ENCODE measurements at regions of chr9 and their contacts with region 1.

Region 1: DNA sequence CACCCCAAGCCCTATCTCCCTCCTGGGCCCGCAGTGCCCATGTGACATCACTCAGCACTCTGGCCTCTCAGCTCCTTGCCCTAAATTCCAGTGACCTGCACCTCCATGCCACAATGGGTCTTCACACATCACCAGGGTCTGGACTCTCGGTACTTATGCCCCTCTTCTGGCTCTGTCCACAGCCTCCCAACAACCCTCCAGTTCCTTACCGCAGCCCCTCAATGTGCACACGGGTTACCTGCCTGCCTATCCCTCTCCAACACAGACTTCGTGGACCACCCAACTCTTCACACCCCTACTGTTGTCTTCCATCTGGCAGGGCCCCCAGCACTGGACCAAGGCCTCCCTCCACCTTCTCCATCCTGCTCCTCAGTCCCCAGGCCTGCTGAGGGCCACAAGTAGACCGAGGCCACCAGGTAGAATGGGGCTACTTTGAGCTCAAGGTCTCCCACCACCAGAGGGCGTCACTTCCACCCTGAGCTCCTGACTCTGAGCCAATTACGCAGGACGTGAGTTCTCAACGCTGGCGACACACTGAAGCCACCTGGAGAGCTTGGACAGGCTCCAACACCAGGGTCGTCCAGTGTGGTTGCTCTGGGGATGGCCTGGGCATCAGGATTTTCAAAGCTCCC is 172.1 kb downstream of the GABBR2 start:
- DNase-seq: peak; percentile 4
- ATAC-seq: peak; percentile 89
- H3K4me3 ChIP-seq: no peak overlapping the region
- H3K27ac ChIP-seq: no peak overlapping the region
- H3K4me1 ChIP-seq: no peaks in the 10 kb centered on the region
- H3K27me3 ChIP-seq: peaks cover 0 to 5% of the 10 kb centered on the region in 2 experiments; a peak in 1 of 4 replicates
- CTCF ChIP-seq: peak; percentile 53 to 78 (median 74)
- EP300 ChIP-seq: no peak
- POLR2A ChIP-seq: no peak
- RAD21 ChIP-seq: peak; percentile 58

Region 2: DNA sequence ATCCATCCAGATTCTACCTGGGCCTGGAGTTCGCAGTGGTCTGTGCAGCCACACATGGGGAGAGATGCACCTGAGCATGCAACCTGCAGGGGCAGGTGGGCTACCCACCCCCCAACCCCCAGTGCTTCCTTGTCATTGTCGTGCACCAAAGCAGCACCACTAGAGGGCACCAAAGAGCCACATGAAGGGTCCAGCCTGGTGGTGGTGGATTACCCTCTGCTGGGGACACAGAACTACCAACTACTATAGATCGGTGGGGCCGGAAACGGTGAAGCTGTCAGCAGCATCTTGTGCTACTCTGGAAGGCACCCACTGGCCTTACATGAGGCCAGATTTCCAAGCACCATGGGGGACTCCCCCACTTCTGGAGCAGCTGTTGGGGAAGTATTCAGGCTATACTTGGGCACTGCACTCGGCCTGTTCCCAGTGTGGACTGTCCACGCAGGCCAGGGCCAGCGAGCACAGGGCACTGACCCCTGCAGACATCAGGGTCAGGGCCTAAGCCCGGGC is 221.1 kb before region 1 on chr9:
- CTCF ChIA-PET with region 1: no interaction called
- POLR2A ChIA-PET with region 1: no interaction called
- RAD21 ChIA-PET with region 1: interaction called, 4 read pairs
- SMC1A ChIA-PET with region 1: no interaction called
- in situ Hi-C with region 1: no loop called
- intact Hi-C with region 1: loop called (anchors 10 kb)
- DNase-seq: peak; percentile 26
- ATAC-seq: peak; percentile 95
- H3K4me3 ChIP-seq: no peak overlapping the region
- H3K27ac ChIP-seq: no peak overlapping the region
- H3K4me1 ChIP-seq: no peaks in the 10 kb centered on the region
- H3K27me3 ChIP-seq: no peaks in the 10 kb centered on the region
- CTCF ChIP-seq: peak; percentile 91 to 94 (median 94)
- EP300 ChIP-seq: no peak
- POLR2A ChIP-seq: no peak
- RAD21 ChIP-seq: peak; percentile 94

Region 3: DNA sequence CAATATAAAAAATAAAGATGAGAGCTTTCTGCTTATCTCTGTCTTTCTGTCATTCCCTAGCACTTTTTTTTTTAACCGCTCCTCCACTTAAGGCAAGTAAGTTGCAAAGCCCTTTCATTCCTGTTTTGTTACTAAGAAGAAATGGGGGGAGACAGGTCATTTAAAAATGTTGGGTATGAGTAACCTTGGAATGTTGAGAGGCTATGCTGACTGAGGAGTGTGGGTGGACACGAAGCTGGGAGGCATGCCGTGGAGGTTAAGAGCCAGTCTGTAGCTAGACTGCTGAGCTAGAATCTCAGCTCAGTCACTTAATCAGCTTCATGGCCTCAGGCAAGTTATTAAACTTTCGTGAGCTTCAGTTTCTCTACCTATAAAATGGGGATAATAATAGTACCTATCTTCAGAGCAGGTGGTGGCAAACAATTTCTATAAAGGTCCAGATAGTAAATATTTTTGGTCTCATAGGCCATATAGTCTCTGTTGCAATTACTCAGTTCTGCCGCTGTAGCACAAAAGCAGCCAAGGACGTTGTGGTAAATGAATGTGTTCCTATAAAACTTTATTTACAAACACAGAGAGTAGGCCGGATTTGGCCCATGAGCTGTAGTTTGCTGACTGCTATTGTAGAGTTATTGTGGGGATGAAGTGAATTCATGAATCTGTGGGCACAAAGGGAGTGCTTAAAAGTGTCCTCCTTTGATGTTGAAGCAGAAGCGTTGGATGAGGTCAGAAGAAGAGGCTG is 47.9 kb before region 1 on chr9:
- CTCF ChIA-PET with region 1: no interaction called
- POLR2A ChIA-PET with region 1: no interaction called
- RAD21 ChIA-PET with region 1: no interaction called
- SMC1A ChIA-PET with region 1: no interaction called
- in situ Hi-C with region 1: no loop called
- intact Hi-C with region 1: no loop called
- DNase-seq: no peak
- ATAC-seq: no peak
- H3K4me3 ChIP-seq: no peak overlapping the region
- H3K27ac ChIP-seq: no peak overlapping the region
- H3K4me1 ChIP-seq: no peaks in the 10 kb centered on the region
- H3K27me3 ChIP-seq: 0 out of 4 replicates have a peak, but pooled peaks cover 0 to 1% of the 10 kb centered on the region in 2 experiments
- CTCF ChIP-seq: no peak
- EP300 ChIP-seq: no peak
- POLR2A ChIP-seq: no peak
- RAD21 ChIP-seq: no peak

Region 4: GRCh38 chr9:98575379-98576346 is 39.0 kb after region 1 on chr9:
- CTCF ChIA-PET with region 1: interaction called, 11 read pairs
- POLR2A ChIA-PET with region 1: no interaction called
- RAD21 ChIA-PET with region 1: no interaction called
- SMC1A ChIA-PET with region 1: no interaction called
- in situ Hi-C with region 1: no loop called
- intact Hi-C with region 1: no loop called
- DNase-seq: peak; percentile 86
- ATAC-seq: peak; percentile 87
- H3K4me3 ChIP-seq: no peak overlapping the region
- H3K27ac ChIP-seq: peak overlapping the region; percentile 31
- H3K4me1 ChIP-seq: peaks cover 28% of the 10 kb centered on the region
- H3K27me3 ChIP-seq: no peaks in the 10 kb centered on the region
- CTCF ChIP-seq: no peak
- EP300 ChIP-seq: peak in 1 of 2 experiments; percentile 27; a peak in 1 of 4 replicates
- POLR2A ChIP-seq: no peak
- RAD21 ChIP-seq: no peak

Region 5: GRCh38 chr9:98707166-98708102 is 170.8 kb after region 1 on chr9:
- CTCF ChIA-PET with region 1: no interaction called
- POLR2A ChIA-PET with region 1: no interaction called
- RAD21 ChIA-PET with region 1: no interaction called
- SMC1A ChIA-PET with region 1: no interaction called
- in situ Hi-C with region 1: no loop called
- intact Hi-C with region 1: loop called (anchors 2 kb)
- DNase-seq: no peak
- ATAC-seq: peak; percentile 80
- H3K4me3 ChIP-seq: no peak overlapping the region
- H3K27ac ChIP-seq: no peak overlapping the region
- H3K4me1 ChIP-seq: no peaks in the 10 kb centered on the region
- H3K27me3 ChIP-seq: peaks cover 3 to 12% of the 10 kb centered on the region in 2 experiments; a peak in 3 of 4 replicates
- CTCF ChIP-seq: peak; percentile 34 to 40 (median 35); a peak in 4 of 6 replicates
- EP300 ChIP-seq: no peak
- POLR2A ChIP-seq: no peak
- RAD21 ChIP-seq: peak; percentile 40

Region 6: DNA sequence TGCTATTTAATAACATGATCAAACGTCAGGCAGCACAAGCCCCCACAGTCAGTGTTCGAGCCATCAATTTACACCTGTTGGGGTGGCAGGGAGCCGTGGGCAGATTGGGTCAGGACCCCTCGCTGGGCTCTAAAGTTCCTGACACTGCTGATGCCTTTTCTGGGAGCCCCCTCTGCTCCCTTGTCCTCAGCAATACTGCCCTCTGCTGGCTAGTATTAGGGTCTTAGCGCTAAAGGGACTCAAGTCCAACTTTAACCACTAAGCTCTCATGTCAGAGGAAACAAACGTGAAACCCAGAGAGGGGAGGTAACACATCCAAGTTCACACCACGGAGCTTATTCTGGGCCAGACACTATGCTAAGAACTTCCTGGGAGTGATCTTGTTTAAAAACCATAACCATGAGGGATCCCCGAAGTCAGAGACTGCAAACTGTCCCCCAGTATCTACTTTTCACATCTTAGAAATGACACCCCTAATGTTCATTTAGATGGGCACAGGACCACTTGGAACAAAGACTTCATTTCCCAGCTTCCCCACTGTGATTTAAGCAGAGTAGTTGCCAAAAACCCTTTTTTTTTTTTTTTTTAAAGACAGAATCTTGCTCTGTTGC is 239.3 kb after region 1 on chr9:
- CTCF ChIA-PET with region 1: interaction called, 52 read pairs
- POLR2A ChIA-PET with region 1: no interaction called
- RAD21 ChIA-PET with region 1: interaction called, 23 read pairs
- SMC1A ChIA-PET with region 1: interaction called, 8 read pairs
- in situ Hi-C with region 1: loop called (anchors 10 kb)
- intact Hi-C with region 1: loop called (anchors 1 kb)
- DNase-seq: no peak
- ATAC-seq: peak; percentile 91
- H3K4me3 ChIP-seq: no peak overlapping the region
- H3K27ac ChIP-seq: no peak overlapping the region
- H3K4me1 ChIP-seq: no peaks in the 10 kb centered on the region
- H3K27me3 ChIP-seq: no peaks in the 10 kb centered on the region
- CTCF ChIP-seq: peak; percentile 76 to 79 (median 76)
- EP300 ChIP-seq: no peak
- POLR2A ChIP-seq: no peak
- RAD21 ChIP-seq: peak; percentile 90

Region 7: DNA sequence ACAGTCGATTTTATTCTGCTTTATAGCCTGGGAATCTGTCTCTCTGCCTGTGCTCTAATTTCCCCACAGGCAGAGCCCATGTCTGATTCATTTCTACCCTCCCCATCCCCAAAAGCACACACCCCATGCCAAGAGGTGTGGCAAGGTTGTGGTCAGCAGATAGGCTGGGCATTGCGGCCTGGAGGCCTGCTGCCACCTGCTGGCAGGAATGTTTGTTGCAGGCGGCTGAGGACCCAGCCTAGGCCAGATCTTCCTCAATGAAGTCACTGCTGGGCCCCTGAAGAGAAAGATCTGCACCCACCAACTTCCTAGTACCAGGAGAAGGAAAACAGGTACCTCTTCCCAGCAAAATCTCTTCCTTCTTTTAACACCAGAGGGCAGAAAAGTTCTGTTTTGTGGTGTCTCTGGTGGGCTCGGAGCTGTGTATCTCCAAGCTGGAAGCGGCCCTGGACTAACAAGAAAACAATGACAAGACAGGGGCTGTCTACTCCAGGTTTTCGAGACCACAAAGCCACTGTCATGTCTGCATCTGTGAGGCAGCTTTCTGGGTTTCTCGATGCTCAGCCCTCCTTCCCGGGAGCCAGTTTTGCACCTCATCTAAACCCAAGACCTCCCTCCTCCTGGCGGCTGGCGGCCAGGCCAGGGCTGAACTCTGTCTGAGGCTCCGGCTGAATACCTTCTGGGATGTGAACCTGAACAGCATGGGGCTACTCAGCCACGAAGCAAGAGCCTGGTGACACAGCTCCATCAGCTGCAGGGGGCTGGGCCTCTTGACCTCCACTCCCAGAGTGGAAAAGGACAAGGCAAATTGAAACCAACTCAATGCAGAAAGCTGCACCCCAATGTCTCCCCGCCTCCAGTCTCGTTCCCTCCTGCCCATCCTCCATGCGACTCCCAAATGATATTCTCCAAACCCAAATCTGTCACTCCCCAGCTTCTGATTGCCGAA is 254.8 kb after region 1 on chr9:
- CTCF ChIA-PET with region 1: interaction called, 3 read pairs
- POLR2A ChIA-PET with region 1: interaction called, 4 read pairs
- RAD21 ChIA-PET with region 1: interaction called, 3 read pairs
- SMC1A ChIA-PET with region 1: no interaction called
- in situ Hi-C with region 1: no loop called
- intact Hi-C with region 1: loop called (anchors 1 kb)
- DNase-seq: no peak
- ATAC-seq: peak; percentile 95
- H3K4me3 ChIP-seq: no peak overlapping the region
- H3K27ac ChIP-seq: no peak overlapping the region
- H3K4me1 ChIP-seq: peaks cover 3% of the 10 kb centered on the region; the same call in 1 of the 2 replicates
- H3K27me3 ChIP-seq: peaks cover 0 to 2% of the 10 kb centered on the region in 2 experiments; a peak in 1 of 4 replicates
- CTCF ChIP-seq: peak; percentile 90 to 97 (median 96)
- EP300 ChIP-seq: no peak
- POLR2A ChIP-seq: no peak
- RAD21 ChIP-seq: peak; percentile 82